ENCODE measurements at regions of chr2 and their contacts with region 1.

Region 1: DNA sequence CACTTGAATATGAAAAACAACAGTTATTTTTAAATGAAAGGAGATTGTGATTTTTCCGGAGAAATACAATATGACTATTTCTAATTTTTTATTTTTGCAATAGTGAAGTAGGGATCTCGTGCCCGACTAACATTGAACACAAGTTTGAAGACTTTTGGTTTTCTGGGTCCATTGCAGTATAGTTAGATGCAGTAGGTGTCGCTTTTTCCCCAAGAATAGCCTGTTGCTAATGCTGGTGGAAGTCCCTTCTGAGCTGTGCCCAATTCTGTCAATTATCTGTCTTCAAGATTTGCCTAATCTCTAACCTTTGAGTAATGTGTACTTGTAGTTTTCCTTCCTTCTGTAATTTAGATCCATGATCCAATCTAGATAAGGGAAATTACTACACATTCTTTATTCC is 36.5 kb downstream of the SEMA4F start:
- DNase-seq: peak; percentile 28
- H3K4me3 ChIP-seq: no peak overlapping the region
- CTCF ChIP-seq: peak; percentile 81

Region 2: DNA sequence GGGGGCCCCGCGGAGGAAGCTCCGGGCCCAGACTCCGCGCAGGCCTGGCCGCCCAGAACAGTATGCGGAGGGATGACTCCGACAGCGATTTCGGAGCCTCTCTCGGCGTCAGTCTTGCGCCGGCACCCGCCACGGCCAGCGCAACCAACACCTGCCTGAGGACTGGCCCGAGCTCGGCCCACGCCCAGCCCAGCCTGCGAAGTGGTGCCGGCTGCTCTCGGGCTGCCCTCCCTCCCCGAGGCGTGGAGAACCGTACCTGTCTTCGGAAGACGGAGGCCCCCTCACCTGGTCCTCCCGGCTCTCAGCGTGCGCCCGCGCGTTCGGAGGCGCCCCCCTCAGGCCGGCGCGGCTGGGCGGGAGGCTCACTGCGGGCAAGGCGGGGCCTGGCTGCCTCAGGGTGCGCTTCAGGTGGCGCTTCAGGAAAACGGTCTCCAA is 42.5 kb before region 1 on chr2 and contains the start of gene M1AP:
- in situ Hi-C with region 1: loop called (anchors 5 kb)
- DNase-seq: no peak
- H3K4me3 ChIP-seq: peak within 1 kb of the TSS; percentile 18
- CTCF ChIP-seq: no peak

Region 3: GRCh38 chr2:74856004-74856578 is 165.5 kb after region 1 on chr2:
- in situ Hi-C with region 1: loop called (anchors 5 kb)
- DNase-seq: no peak
- H3K4me3 ChIP-seq: no peak overlapping the region
- CTCF ChIP-seq: no peak

Measured in astrocyte of the cerebellum (primary cell).